HCT116 (cell line): ENCODE measurements at regions of chr4 and their contacts with region 1.

Region 1: DNA sequence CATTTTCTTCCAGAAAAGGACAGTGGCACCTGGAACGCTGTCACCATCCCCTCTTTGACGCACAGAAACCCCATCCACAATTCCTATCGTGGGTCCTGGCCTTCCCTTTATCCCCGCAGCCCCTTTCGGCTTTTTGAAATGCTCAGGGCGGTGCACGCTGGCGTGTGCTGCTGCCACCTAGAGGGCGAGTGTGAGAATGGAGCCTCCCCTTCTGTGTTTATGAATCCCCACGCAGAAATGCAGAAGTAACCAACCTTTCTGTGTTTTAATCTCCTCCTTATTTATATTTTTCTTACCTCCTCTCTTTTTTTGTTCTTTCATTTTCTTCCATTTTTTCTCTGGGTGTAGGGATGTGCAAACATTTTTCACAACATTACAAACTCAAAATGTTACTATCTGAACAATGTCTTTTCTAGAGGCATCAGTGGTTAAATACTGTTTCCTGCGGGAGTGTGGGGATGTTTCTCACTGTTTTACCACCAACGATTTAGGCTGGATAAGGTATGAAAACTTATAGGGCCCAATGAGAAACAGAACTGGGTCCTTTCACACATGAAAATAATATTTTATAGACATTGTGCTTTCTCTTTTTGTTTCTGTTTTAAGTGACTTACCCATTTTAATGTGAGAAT is 50.0 kb downstream of the TMA16 start:
- DNase-seq: no peak
- ATAC-seq: peak; percentile 85
- H3K4me3 ChIP-seq: no peak overlapping the region
- H3K27ac ChIP-seq: no peak overlapping the region
- H3K4me1 ChIP-seq: peaks cover 0 to 7% of the 10 kb centered on the region in 2 experiments; a peak in 1 of 4 replicates
- H3K27me3 ChIP-seq: no peaks in the 10 kb centered on the region
- CTCF ChIP-seq: peak; percentile 59 to 94 (median 94); a peak in 5 of 6 replicates
- POLR2A ChIP-seq: no peak
- RAD21 ChIP-seq: peak; percentile 64

Region 2: DNA sequence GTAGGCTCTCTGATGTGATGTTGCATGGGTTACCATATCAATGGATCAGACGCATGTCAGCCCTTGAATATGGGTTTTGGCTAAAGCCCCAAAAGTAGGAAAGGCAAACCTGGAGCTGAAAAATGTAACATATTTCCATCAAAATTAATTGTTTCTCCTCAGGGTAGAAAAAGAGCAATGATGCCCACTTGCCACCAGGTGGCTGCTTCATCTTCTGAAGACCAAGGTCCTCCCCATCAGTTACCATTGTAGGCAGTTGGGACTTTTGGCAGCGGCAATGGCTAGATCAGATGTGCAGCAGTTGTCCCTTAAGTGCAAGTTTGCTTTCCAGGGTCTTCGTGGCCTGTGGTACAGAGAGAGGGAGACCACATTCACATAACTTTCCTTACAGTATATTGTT is 496.1 kb before region 1 on chr4:
- CTCF ChIA-PET with region 1: no interaction called
- POLR2A ChIA-PET with region 1: no interaction called
- RAD21 ChIA-PET with region 1: no interaction called
- intact Hi-C with region 1: loop called (anchors 5 kb)
- DNase-seq: peak; percentile 34
- ATAC-seq: peak; percentile 77
- H3K4me3 ChIP-seq: no peak overlapping the region
- H3K27ac ChIP-seq: no peak overlapping the region
- H3K4me1 ChIP-seq: no peaks in the 10 kb centered on the region
- H3K27me3 ChIP-seq: no peaks in the 10 kb centered on the region
- CTCF ChIP-seq: peak; percentile 55 to 63 (median 61); a peak in 5 of 6 replicates
- POLR2A ChIP-seq: no peak
- RAD21 ChIP-seq: peak; percentile 58

Region 3: GRCh38 chr4:163107754-163108153 is 436.8 kb before region 1 on chr4:
- CTCF ChIA-PET with region 1: no interaction called
- POLR2A ChIA-PET with region 1: no interaction called
- RAD21 ChIA-PET with region 1: no interaction called
- intact Hi-C with region 1: loop called (anchors 5 kb)
- DNase-seq: peak; percentile 2
- ATAC-seq: peak; percentile 42; the same call in 1 of the 2 replicates
- H3K4me3 ChIP-seq: no peak overlapping the region
- H3K27ac ChIP-seq: no peak overlapping the region
- H3K4me1 ChIP-seq: no peaks in the 10 kb centered on the region
- H3K27me3 ChIP-seq: no peaks in the 10 kb centered on the region
- CTCF ChIP-seq: peak in 2 of 3 experiments; percentile 17 to 52; a peak in 3 of 6 replicates
- POLR2A ChIP-seq: no peak
- RAD21 ChIP-seq: peak; percentile 43; the same call in 1 of the 2 replicates

Region 4: GRCh38 chr4:163484906-163485305 is 59.6 kb before region 1 on chr4:
- CTCF ChIA-PET with region 1: no interaction called
- POLR2A ChIA-PET with region 1: no interaction called
- RAD21 ChIA-PET with region 1: no interaction called
- intact Hi-C with region 1: loop called (anchors 1 kb)
- DNase-seq: peak; percentile 50
- ATAC-seq: peak; percentile 89
- H3K4me3 ChIP-seq: no peak overlapping the region
- H3K27ac ChIP-seq: no peak overlapping the region
- H3K4me1 ChIP-seq: no peaks in the 10 kb centered on the region
- H3K27me3 ChIP-seq: no peaks in the 10 kb centered on the region
- CTCF ChIP-seq: peak; percentile 50 to 78 (median 61); a peak in 5 of 6 replicates
- POLR2A ChIP-seq: no peak
- RAD21 ChIP-seq: peak; percentile 70

Region 5: GRCh38 chr4:164731827-164732474 is 1187.4 kb after region 1 on chr4:
- CTCF ChIA-PET with region 1: interaction called, 10 read pairs
- POLR2A ChIA-PET with region 1: no interaction called
- RAD21 ChIA-PET with region 1: no interaction called
- intact Hi-C with region 1: no loop called
- DNase-seq: peak; percentile 43
- ATAC-seq: peak; percentile 81
- H3K4me3 ChIP-seq: no peak overlapping the region
- H3K27ac ChIP-seq: no peak overlapping the region
- H3K4me1 ChIP-seq: no peaks in the 10 kb centered on the region
- H3K27me3 ChIP-seq: no peaks in the 10 kb centered on the region
- CTCF ChIP-seq: peak; percentile 71 to 91 (median 82)
- POLR2A ChIP-seq: no peak
- RAD21 ChIP-seq: peak; percentile 87